MCF 10A (cell line): ENCODE measurements at regions of chr4 and their contacts with region 1.

Region 1: DNA sequence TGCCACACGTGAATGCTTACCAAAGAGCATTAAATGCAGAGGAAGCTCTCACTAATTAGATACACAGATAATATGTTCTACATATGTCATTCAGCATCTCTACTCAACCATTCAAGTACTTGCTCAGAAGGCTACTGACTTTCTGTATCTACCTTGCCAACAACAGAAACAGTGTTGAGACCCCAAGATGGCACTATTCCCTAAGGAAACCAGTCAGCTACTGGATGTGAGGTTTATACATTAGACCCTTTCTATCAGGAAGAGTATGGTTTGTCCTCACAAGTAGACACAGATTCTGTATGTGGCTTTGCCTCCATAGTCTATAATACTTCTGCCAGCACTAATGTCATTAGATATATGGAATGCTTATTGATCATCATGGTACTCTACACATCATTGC is 443.9 kb upstream of the INTU start:
- DNase-seq: peak; percentile 33
- H3K4me3 Mint-ChIP-seq: no peak overlapping the region
- H3K27ac Mint-ChIP-seq: no peak overlapping the region
- H3K4me1 Mint-ChIP-seq: no peaks in the 10 kb centered on the region
- H3K27me3 Mint-ChIP-seq: no peaks in the 10 kb centered on the region
- CTCF ChIP-seq: peak; percentile 19

Region 2: DNA sequence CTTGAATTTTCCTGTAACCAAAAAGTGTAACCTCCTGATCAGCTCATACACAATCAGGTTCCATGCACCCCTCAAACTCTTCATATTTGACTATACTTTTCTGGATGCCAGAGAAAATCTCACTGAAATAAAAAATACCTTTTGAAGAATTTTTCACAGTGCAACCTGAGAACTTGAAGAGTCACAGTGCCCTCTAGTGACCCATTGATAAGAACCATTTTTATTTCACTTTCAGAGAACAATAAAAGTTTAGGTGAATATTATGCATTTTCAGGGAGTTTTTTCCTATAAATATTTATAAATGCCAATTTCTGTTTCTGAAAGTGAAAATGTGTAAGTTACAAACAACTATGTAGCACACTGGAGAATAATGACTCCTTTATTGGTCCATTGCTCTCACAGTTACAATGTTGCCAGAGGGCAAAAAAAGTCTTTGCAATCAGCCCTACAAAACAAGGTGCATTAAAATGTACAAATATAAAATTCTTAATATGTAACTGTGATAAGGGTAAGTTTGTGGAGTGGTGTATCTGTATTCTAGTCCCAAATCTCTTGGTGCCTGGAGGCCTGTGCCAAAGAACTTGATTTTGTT is 290.3 kb after region 1 on chr4:
- CTCF ChIA-PET with region 1: interaction called, 4 read pairs
- POLR2A ChIA-PET with region 1: no interaction called
- intact Hi-C with region 1: loop called (anchors 2 kb)
- DNase-seq: peak; percentile 58
- H3K4me3 Mint-ChIP-seq: no peak overlapping the region
- H3K27ac Mint-ChIP-seq: no peak overlapping the region
- H3K4me1 Mint-ChIP-seq: no peaks in the 10 kb centered on the region
- H3K27me3 Mint-ChIP-seq: no peaks in the 10 kb centered on the region
- CTCF ChIP-seq: peak; percentile 79